Panc1 (cell line): ENCODE measurements at regions of chr1 and their contacts with region 1.

Region 1: DNA sequence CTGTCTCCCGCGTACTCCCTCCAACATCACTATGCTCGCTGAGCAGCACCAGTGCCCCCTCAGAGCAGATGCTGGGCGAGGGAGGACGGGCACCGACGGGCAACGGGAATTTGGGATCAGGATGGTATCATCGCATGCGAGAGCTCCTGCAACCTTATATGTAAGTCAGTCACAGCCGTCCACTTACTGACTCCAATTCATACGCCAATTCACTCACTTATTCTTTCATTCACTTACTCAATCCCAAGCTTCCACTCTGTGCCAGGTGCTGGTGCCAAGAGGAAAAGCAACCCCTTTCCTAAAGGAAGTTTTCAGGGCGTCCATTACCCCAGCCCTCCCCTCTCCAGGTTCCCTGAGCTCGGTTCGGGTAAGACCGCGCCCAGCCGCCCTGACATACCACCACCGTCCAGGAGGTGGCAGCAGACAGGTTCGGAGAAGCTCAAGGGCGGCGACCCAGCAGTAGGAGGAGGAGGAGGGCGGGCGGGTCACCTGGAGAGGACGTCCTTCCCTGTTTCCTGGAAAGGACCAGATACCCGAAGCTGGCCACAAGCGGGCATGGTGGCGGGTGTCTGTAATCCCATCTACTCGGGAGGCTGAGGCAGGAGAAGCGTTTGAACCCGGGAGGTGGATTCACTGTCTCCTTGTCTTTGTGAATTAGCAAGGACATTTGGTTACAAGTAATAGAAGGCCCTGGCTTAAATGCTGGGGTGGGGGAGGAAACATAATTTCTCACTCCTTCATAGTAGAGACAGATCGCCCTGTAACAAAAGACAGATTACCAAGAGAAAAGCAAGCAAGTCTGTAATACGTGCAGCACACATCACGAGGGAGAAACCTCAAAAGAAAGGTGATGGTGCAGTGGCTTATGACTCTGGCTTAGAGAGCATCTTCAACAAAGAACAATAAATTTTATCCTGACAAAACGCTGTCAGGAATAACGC is 7.6 kb upstream of the IL22RA1 start:
- DNase-seq: peak; percentile 84
- ATAC-seq: peak; percentile 98
- H3K4me3 ChIP-seq: peak overlapping the region; percentile 20 to 51
- H3K27ac ChIP-seq: peak overlapping the region; percentile 37
- H3K4me1 ChIP-seq: peaks cover 5% of the 10 kb centered on the region; the same call in 1 of the 2 replicates
- H3K27me3 ChIP-seq: no peaks in the 10 kb centered on the region
- CTCF ChIP-seq: peak; percentile 95

Region 2: GRCh38 chr1:23953020-23953419 is 197.5 kb before region 1 on chr1:
- CTCF ChIA-PET with region 1: interaction called, 11 read pairs
- POLR2A ChIA-PET with region 1: no interaction called
- in situ Hi-C with region 1: no loop called
- intact Hi-C with region 1: no loop called
- DNase-seq: no peak
- ATAC-seq: no peak
- H3K4me3 ChIP-seq: no peak overlapping the region
- H3K27ac ChIP-seq: peak overlapping the region; percentile 75
- H3K4me1 ChIP-seq: peaks cover 54% of the 10 kb centered on the region
- H3K27me3 ChIP-seq: no peaks in the 10 kb centered on the region
- CTCF ChIP-seq: no peak